ENCODE measurements at regions of chr5 and their contacts with region 1.

Region 1: DNA sequence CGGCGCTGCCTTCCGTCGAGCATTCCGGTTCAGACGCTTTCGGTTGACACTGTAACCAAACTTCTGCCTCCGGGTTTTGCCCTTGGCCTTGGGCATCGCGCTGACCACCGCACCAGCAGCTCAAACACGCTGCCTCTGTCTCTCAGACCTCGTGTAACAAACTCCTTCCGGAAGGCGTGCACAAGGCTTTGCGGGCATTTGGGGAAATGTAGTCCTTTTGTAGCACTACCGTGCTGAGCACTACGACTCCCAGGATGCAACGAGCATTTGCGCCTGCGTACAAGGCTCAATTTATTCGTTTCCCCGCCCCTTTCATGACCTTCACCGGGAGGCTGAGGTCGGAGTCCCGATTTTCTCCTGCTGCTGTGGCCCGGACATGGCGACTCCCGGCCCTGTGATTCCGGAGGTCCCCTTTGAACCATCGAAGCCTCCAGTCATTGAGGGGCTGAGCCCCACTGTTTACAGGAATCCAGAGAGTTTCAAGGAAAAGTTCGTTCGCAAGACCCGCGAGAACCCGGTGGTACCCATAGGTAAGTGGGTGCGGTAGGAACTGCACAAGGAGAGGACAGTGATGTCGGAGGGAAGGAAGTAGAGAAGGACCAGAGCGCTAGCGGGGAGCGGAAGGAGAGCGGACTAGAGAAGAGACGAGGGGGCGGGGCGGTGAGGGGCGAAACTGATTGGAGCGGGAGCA is at the starts of genes HIGD2A and NOP16:
- DNase-seq: peak; percentile 96
- H3K4me3 Mint-ChIP-seq: peak within 1 kb of the TSS; percentile 100
- H3K27ac Mint-ChIP-seq: peak within 1 kb of the TSS; percentile 98
- H3K4me1 Mint-ChIP-seq: peaks cover 44% of the 10 kb centered on the region
- H3K27me3 Mint-ChIP-seq: no peaks in the 10 kb centered on the region
- total RNA-seq, gene HIGD2A: 93.2 and 93.5 TPM in 2 replicates
- total RNA-seq, gene NOP16: 111 TPM in 2 replicates

Region 2: GRCh38 chr5:176361437-176362232 is 27.0 kb before region 1 on chr5 and contains the start of gene KIAA1191:
- intact Hi-C with region 1: loop called (anchors 1 kb)
- DNase-seq: peak; percentile 93
- H3K4me3 Mint-ChIP-seq: peak within 1 kb of the TSS; percentile 97
- H3K27ac Mint-ChIP-seq: peak within 1 kb of the TSS; percentile 91
- H3K4me1 Mint-ChIP-seq: peaks cover 36% of the 10 kb centered on the region
- H3K27me3 Mint-ChIP-seq: no peaks in the 10 kb centered on the region
- total RNA-seq, gene KIAA1191: 60.9 and 63.4 TPM in 2 replicates

Region 3: DNA sequence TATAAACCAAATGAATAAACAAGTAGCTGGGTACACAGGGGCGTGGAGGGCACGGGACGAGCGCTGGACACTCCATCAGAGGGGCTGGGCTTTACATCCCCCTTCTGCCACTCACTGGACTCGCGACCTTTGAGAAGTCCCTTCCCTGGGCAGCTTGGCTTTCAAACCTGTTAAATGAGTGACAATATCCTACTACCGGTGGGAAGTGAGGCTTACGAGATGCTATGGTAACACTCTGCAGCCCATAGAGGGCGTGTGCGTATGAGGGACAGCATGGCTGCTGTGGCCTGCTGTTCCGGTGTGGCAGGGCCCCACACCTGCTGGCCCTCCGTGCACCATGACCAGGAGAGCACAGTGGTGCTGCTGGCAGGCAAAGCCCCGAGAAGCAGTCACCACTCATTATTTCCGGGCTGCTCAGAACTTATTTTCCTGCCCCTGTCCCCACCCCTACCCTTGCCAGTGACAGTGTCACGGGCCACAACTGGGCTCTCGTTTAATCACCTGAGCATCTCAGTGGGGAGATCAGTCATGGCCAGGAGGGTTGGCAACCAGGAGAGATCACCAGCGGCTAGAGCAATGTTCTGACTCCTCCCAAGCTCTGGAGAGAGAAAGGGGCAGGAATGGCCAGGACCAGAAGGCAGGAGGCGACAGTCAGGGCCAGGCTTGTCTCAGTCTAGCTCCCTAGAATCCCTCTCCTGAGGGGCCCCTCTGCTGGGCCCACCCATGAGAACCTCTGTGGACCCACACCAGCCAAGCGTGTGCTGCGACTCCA is 17.3 kb after region 1 on chr5:
- intact Hi-C with region 1: no loop called
- DNase-seq: no peak
- H3K4me3 Mint-ChIP-seq: no peak overlapping the region
- H3K27ac Mint-ChIP-seq: no peak overlapping the region
- H3K4me1 Mint-ChIP-seq: peaks cover 2% of the 10 kb centered on the region
- H3K27me3 Mint-ChIP-seq: no peaks in the 10 kb centered on the region

Region 4: GRCh38 chr5:176447982-176448608 is 59.5 kb after region 1 on chr5 and contains the start of gene FAF2:
- intact Hi-C with region 1: loop called (anchors 1 kb)
- DNase-seq: peak; percentile 99
- H3K4me3 Mint-ChIP-seq: peak within 1 kb of the TSS; percentile 97
- H3K27ac Mint-ChIP-seq: peak within 1 kb of the TSS; percentile 96
- H3K4me1 Mint-ChIP-seq: peaks cover 40% of the 10 kb centered on the region
- H3K27me3 Mint-ChIP-seq: peaks cover 2% of the 10 kb centered on the region
- total RNA-seq, gene FAF2: 46.0 and 47.3 TPM in 2 replicates

Region 5: DNA sequence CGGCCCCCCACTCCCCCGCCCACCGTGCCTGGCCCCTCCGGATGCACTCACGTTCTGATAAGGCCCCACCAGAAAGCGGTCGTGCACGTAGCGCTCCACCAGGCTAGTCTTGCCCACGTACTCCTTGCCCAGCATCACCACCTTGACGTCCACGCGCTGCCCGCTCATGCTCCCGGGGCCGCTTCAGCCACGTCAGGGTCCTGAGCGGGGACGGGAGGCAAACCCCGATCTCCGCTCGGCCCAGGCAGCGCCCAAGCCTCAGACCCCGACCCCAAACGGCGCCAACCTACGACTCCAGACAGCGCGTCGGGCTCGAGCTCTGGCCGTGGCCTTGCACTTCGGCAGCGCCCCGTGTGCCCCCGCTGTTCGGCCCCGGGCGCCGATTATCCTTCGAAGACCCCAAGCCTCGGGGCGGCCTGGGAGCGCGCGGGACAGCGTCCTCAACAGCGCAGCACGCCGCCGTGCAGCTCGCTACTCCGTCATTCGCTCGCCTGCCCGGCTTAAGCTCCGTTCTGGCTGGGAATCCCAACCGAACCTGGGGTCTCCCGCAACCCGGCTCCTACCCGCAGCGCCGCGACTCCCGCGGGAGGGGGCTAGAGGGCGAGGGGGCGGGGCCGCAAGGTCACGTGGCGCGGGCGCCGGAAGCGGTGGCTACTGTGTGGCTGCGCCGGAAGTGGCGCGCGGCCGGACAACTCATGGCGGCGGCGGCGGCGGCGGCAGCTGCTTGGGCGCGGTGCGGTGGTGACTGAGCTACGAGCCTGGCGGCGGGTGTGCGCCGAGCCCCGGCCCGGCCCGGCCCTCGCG is 914.7 kb after region 1 on chr5 and contains the starts of genes PRELID1 and RAB24:
- intact Hi-C with region 1: loop called (anchors 1 kb)
- DNase-seq: peak; percentile 86
- H3K4me3 Mint-ChIP-seq: peak within 1 kb of the TSS; percentile 93
- H3K27ac Mint-ChIP-seq: peak within 1 kb of the TSS; percentile 84
- H3K4me1 Mint-ChIP-seq: peaks cover 75% of the 10 kb centered on the region
- H3K27me3 Mint-ChIP-seq: no peaks in the 10 kb centered on the region
- total RNA-seq, gene PRELID1: 239 and 250 TPM in 2 replicates
- total RNA-seq, gene RAB24: 19.7 and 22.4 TPM in 2 replicates

Region 6: GRCh38 chr5:177554474-177555111 is 1166.0 kb after region 1 on chr5 and contains the start of gene FAM193B:
- intact Hi-C with region 1: loop called (anchors 10 kb)
- DNase-seq: peak; percentile 94
- H3K4me3 Mint-ChIP-seq: peak within 1 kb of the TSS; percentile 88
- H3K27ac Mint-ChIP-seq: peak within 1 kb of the TSS; percentile 85
- H3K4me1 Mint-ChIP-seq: peaks cover 37% of the 10 kb centered on the region
- H3K27me3 Mint-ChIP-seq: no peaks in the 10 kb centered on the region
- total RNA-seq, gene FAM193B: 70.9 and 79.4 TPM in 2 replicates